Activated naive CD4-positive, alpha-beta T cell treated with anti-CD3 and anti-CD28 coated beads for 36 hours (primary cell): ENCODE measurements at regions of chr7 and their contacts with region 1.

Region 1: DNA sequence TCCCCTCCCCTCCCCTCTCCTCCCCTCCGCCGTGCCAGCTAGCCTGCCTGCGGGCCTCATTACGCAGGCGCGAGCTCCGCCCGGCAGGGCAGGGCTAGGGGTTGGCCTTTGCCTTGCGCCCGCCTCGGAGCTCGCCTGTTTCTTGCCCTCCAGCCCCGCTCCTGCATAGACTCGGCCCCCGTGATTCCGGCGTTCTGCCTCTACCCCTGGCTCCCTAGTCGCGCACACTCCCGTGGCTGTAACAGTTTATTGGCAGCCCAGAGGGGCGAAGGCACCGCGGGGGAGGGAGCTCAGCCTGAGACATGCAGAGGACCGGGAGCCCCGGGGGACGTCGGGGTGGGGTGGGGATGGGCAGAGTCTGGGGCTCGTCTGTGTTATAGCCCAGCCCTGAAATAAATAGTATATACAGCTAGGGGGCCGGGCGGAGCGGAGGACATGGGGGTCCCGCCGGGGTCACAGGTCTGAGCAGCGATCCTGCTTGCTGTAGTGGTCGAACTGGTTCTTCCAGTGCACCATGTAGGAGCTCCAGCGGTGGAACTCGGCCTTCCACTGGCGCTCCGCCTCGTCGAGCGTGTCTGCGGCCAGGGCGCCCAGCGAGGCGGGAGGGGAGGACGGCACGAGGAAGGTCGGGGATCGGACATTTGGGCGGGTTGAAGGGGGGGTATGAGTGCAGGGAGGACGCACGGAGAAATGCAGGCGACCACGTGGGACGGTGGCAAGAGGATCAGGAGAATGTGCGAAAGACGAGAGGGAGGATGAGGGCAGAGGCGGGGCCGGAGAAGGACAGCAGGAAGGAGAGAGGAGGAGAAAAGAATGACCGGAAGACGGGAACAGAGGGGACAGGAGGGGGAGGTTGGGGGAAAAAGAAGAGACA is 483 bp upstream of the UFSP1 start:
- DNase-seq: peak; percentile 92
- H3K4me3 Mint-ChIP-seq: peak overlapping the region; percentile 85
- H3K27ac Mint-ChIP-seq: no peak overlapping the region
- H3K4me1 Mint-ChIP-seq: peaks cover 42% of the 10 kb centered on the region
- H3K27me3 Mint-ChIP-seq: peaks cover 18% of the 10 kb centered on the region

Region 2: GRCh38 chr7:100611974-100612729 is 277.8 kb before region 1 on chr7 and contains the start of gene MOSPD3:
- CTCF ChIA-PET with region 1: no interaction called
- intact Hi-C with region 1: loop called (anchors 5 kb)
- DNase-seq: peak; percentile 99
- H3K4me3 Mint-ChIP-seq: peak within 1 kb of the TSS; percentile 98
- H3K27ac Mint-ChIP-seq: peak within 1 kb of the TSS; percentile 99
- H3K4me1 Mint-ChIP-seq: peaks cover 13% of the 10 kb centered on the region
- H3K27me3 Mint-ChIP-seq: no peaks in the 10 kb centered on the region
- total RNA-seq, gene MOSPD3: 12.3 to 13.0 TPM

Region 3: DNA sequence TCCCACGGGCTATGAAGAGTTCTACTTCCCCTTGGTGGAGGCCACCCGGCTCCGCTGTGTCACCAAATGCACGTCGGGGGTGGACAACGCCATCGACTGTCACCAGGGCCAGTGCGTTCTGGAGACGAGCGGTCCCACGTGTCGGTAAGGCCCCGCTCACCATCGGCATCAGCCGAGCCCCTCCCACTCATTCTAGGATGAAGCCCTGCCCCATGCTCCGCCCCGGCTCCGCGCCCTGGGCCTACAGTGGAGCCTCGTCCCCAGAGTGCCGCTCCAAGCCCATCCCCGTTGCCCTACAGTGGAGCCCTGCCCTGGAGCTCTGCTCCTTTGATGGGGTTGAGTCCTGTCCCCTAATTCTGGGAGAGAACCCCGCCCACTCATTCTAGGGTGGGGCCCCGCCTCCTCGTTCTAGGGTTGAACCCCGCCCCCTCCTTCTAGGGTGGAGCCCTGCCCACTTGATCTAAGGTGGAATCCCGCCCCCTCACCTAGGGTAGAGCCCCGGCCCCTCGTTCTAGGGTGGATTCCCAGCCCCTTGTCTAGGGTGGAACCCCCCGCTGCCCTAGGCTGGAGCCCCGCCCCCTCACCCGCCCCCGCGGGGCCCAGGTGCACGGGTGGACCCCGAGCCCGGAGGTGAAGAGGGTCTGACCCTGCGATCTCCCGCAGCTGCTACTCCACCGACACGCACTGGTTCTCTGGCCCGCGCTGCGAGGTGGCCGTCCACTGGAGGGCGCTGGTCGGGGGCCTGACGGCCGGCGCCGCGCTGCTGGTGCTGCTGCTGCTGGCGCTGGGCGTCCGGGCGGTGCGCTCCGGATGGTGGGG is 75.9 kb after region 1 on chr7:
- CTCF ChIA-PET with region 1: interaction called, 6 read pairs
- intact Hi-C with region 1: loop called (anchors 1 kb)
- DNase-seq: peak; percentile 85
- H3K4me3 Mint-ChIP-seq: peak overlapping the region; percentile 60
- H3K27ac Mint-ChIP-seq: no peak overlapping the region
- H3K4me1 Mint-ChIP-seq: peaks cover 18% of the 10 kb centered on the region
- H3K27me3 Mint-ChIP-seq: peaks cover 49% of the 10 kb centered on the region

Region 4: GRCh38 chr7:101077303-101078089 is 187.5 kb after region 1 on chr7:
- CTCF ChIA-PET with region 1: no interaction called
- intact Hi-C with region 1: loop called (anchors 1 kb)
- DNase-seq: peak; percentile 94
- H3K4me3 Mint-ChIP-seq: no peak overlapping the region
- H3K27ac Mint-ChIP-seq: no peak overlapping the region
- H3K4me1 Mint-ChIP-seq: peaks cover 7% of the 10 kb centered on the region
- H3K27me3 Mint-ChIP-seq: no peaks in the 10 kb centered on the region

Region 5: DNA sequence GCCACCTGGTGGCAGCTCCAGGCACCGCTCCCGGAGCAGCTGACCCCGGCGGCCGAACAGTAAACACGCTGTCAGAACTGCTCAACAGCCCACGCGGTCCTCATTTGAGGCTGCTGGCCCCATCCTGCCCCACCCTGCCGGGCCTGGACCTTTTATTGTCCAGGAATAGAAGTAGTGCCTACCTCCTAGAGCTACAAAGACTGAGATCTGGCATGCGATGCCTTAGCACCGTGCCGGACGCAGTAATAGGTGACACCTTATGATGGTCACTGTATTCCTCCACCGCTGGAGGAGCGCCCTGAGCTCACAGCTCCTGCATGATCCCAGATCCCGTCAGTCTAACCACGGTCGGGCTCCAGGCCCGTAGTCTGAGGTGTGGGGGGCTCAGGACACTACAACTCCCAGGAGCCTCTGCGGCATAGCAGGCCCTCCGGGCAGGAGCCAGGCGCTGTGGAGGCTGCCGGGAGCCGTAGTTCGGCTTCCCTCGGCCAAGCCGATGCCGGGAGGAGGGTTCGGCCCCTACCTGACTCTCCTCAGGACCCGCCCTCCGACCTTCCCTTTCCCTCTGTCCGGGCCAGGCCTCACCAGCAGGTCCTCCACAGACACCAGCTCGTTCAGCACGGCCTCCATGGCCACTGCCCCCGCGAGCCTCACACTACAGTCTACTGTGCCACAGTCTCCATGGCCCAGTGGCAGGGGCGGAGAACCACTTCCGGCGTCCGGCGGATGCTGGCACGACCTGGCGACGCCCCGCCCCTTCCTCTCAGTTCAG is 354.6 kb after region 1 on chr7 and contains the start of gene FIS1:
- CTCF ChIA-PET with region 1: no interaction called
- intact Hi-C with region 1: loop called (anchors 10 kb)
- DNase-seq: peak; percentile 94
- H3K4me3 Mint-ChIP-seq: peak within 1 kb of the TSS; percentile 99
- H3K27ac Mint-ChIP-seq: peak within 1 kb of the TSS; percentile 96
- H3K4me1 Mint-ChIP-seq: peaks cover 37% of the 10 kb centered on the region
- H3K27me3 Mint-ChIP-seq: no peaks in the 10 kb centered on the region
- total RNA-seq, gene FIS1: 84.2 to 84.3 TPM